Calu3 (cell line): ENCODE measurements at regions of chr4 and their contacts with region 1.

Region 1: DNA sequence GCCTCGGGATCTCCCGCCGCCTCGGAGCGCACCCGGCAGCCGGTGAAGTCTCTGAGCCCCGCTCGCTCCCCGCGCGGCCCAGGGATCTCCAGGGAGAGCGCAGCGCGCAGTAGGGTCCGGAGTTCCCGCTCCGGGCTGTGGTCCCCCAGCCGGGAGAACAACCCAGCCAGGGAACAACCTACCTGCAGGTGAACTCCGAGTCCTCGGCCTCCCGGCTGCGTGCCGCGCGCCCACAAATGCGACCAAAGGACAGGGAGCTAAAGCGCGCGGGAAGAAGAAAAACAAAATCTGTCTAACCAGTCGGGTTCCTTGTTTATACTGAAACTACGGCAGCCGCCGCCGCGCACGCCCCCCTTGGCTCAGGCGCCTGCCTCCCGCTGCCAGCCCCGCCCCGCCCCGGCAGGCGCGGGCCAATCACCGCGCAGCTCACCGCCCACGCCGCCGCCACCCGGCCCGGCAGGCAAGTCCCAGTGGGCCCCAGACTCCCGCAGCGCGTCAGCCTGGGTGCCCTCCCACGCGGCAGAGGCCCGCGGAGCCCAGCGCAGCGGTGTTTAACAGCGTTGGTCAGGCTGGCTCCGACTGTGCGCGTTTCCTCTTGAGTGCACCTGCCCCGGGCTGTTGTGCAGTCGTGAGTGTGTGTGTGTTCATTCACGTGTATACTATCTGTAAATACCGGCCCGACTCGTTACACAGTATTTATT is at the start of gene RASGEF1B:
- DNase-seq: peak; percentile 90
- H3K4me3 Mint-ChIP-seq: peak within 1 kb of the TSS; percentile 87
- H3K27ac Mint-ChIP-seq: peak within 1 kb of the TSS; percentile 80
- H3K4me1 Mint-ChIP-seq: peaks cover 26% of the 10 kb centered on the region
- H3K27me3 Mint-ChIP-seq: no peaks in the 10 kb centered on the region
- CTCF ChIP-seq: no peak
- total RNA-seq, gene RASGEF1B: 33.8 and 36.3 TPM in 2 replicates

Region 2: GRCh38 chr4:81405894-81406401 is 65.8 kb before region 1 on chr4:
- CTCF ChIA-PET with region 1: no interaction called
- intact Hi-C with region 1: loop called (anchors 2 kb)
- DNase-seq: peak; percentile 49
- H3K4me3 Mint-ChIP-seq: no peak overlapping the region
- H3K27ac Mint-ChIP-seq: no peak overlapping the region
- H3K4me1 Mint-ChIP-seq: peaks cover 9% of the 10 kb centered on the region
- H3K27me3 Mint-ChIP-seq: no peaks in the 10 kb centered on the region
- CTCF ChIP-seq: peak; percentile 31

Region 3: GRCh38 chr4:81635739-81636138 is 164.0 kb after region 1 on chr4:
- CTCF ChIA-PET with region 1: no interaction called
- intact Hi-C with region 1: loop called (anchors 5 kb)
- DNase-seq: peak; percentile 71
- H3K4me3 Mint-ChIP-seq: peak overlapping the region; percentile 46
- H3K27ac Mint-ChIP-seq: peak overlapping the region; percentile 94
- H3K4me1 Mint-ChIP-seq: peaks cover 37% of the 10 kb centered on the region
- H3K27me3 Mint-ChIP-seq: no peaks in the 10 kb centered on the region
- CTCF ChIP-seq: no peak

Region 4: DNA sequence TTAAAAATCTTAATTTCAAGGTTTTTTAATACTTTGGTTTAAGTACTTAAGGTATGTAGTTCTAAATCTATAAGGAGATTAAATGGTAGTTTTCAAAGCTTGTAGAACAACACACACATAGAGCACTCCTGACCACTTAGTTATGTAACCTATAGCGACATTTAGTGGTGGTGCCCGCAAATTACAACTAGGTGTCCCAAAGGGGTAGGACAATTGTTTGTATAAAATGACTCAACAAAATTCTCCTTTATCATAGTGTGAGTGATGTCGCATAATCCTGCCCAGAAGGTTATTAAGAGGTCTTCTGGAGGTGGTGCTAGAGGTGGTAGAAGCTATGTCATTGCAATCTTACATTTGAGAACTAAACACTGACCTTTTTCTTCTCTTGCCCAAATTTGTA is 373.0 kb after region 1 on chr4:
- CTCF ChIA-PET with region 1: interaction called, 17 read pairs
- intact Hi-C with region 1: loop called (anchors 1 kb)
- DNase-seq: peak; percentile 71
- H3K4me3 Mint-ChIP-seq: no peak overlapping the region
- H3K27ac Mint-ChIP-seq: peak overlapping the region; percentile 66
- H3K4me1 Mint-ChIP-seq: peaks cover 55% of the 10 kb centered on the region
- H3K27me3 Mint-ChIP-seq: no peaks in the 10 kb centered on the region
- CTCF ChIP-seq: peak; percentile 52

Region 5: DNA sequence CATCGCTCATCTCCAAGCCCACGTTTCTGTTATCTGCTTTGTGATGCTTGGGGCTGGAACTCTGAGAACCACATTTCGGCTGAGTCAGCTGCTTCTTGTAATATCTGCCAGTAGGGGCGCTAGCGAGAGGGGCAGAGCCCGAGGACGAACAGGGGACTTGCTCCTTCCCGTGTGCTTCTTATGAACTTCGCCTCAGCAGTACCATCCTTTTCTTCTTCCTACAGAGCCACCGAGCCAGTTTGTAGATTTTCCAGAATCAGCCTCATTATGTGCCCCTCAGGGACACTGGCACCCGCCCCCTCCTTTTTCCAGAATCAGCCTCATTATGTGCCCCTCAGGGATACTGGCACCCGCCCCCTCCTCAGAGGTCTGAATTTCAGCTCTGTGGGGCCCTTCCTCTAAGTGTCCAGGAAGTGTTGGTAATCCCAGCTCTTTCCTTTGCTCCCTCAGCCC is 441.7 kb after region 1 on chr4:
- CTCF ChIA-PET with region 1: no interaction called
- intact Hi-C with region 1: loop called (anchors 10 kb)
- DNase-seq: peak; percentile 45
- H3K4me3 Mint-ChIP-seq: no peak overlapping the region
- H3K27ac Mint-ChIP-seq: no peak overlapping the region
- H3K4me1 Mint-ChIP-seq: peaks cover 20% of the 10 kb centered on the region
- H3K27me3 Mint-ChIP-seq: no peaks in the 10 kb centered on the region
- CTCF ChIP-seq: peak; percentile 43

Region 6: DNA sequence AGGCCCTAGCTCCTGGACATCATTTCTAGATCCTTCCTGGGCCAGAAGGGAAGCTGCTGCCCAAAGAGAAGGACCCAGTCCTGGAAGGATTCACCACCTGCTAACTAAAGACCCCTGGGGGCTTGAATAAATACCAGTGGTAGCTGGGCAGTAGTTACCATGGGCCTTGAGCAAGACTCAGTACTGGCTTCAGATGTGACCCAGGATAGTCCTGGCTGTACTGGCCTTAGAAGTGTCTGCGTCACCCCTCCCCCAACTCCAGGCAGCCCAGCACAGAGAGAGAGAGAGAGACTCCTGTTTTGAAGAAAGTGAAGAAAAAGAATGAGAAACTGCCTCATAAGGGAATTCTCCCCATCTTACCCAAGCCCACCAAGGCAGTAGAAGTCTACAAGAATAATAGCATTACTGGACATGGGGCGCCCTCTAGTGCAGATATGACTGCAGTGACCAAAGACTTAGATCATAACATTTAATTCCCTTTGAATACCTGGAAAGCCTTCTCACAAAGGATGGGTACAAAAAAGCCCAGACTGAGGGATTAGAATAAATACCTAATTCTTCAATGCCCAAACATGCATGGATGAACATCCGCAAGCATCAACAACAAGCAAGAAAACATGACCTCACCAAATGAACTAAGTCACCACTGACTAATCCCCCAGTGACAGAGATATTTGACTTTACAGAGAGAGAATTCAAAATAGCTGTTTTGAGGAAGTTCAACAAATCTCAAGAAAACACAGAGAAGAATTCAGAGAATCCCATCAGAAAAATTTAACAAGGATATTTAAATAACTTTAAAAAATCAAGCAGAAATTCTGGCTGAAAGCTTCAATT is 730.3 kb after region 1 on chr4:
- CTCF ChIA-PET with region 1: no interaction called
- intact Hi-C with region 1: loop called (anchors 5 kb)
- DNase-seq: peak; percentile 62
- H3K4me3 Mint-ChIP-seq: no peak overlapping the region
- H3K27ac Mint-ChIP-seq: no peak overlapping the region
- H3K4me1 Mint-ChIP-seq: peaks cover 42% of the 10 kb centered on the region
- H3K27me3 Mint-ChIP-seq: no peaks in the 10 kb centered on the region
- CTCF ChIP-seq: peak; percentile 65

Region 7: GRCh38 chr4:82268050-82268825 is 796.5 kb after region 1 on chr4:
- CTCF ChIA-PET with region 1: interaction called, 6 read pairs
- intact Hi-C with region 1: loop called (anchors 5 kb)
- DNase-seq: peak; percentile 44
- H3K4me3 Mint-ChIP-seq: no peak overlapping the region
- H3K27ac Mint-ChIP-seq: no peak overlapping the region
- H3K4me1 Mint-ChIP-seq: peaks cover 10% of the 10 kb centered on the region
- H3K27me3 Mint-ChIP-seq: no peaks in the 10 kb centered on the region
- CTCF ChIP-seq: peak; percentile 46